ENCODE measurements at regions of chr10 and their contacts with region 1.

Region 1: GRCh38 chr10:33952692-33953348 is 618.4 kb upstream of the NRP1 start:
- DNase-seq: peak; percentile 99
- ATAC-seq: peak; percentile 99
- H3K4me3 ChIP-seq: no peak overlapping the region
- H3K27ac ChIP-seq: peak overlapping the region; percentile 10; the same call in 1 of the 2 replicates
- H3K4me1 ChIP-seq: peaks cover 10% of the 10 kb centered on the region; the same call in 1 of the 2 replicates
- H3K27me3 ChIP-seq: no peaks in the 10 kb centered on the region
- CTCF ChIP-seq: no peak

Region 2: DNA sequence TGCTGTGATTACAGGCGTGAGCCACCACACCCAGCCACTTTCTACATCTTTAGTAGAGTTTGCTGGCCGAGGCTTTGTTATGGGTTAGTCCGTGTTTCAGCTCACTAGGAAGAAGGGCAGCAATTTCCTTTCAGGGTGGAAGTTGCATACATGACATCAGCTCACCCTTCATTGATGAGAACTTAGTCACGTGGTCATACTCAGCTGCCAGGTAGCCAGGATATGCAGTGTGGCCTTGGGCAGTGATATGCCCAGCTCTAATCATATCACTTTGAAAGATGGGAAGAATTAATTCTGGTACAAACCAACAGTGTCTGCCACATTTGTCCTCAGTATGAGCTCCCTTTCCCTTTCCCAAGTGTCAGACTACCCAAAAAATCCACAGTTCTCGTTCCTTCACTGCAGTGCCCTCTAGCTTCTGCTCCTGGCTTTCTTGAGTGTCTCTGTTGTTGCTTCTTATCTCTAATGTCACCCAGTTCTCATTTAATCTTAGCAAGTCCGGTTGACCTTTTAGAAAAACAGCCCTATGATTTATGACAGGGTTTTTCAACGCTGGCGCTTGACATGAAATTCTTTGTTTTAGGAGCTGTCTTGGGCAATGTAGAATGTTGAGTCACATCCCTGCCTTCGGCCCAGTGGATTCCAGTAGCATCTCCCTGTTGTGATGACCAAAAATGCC is 886.1 kb before region 1 on chr10:
- CTCF ChIA-PET with region 1: interaction called, 18 read pairs
- POLR2A ChIA-PET with region 1: no interaction called
- intact Hi-C with region 1: no loop called
- DNase-seq: peak; percentile 25
- ATAC-seq: no peak; the same call in 1 of the 2 replicates
- H3K4me3 ChIP-seq: no peak overlapping the region
- H3K27ac ChIP-seq: no peak overlapping the region
- H3K4me1 ChIP-seq: no peaks in the 10 kb centered on the region
- H3K27me3 ChIP-seq: no peaks in the 10 kb centered on the region
- CTCF ChIP-seq: peak; percentile 55

Region 3: GRCh38 chr10:33187427-33187999 is 765.3 kb before region 1 on chr10:
- CTCF ChIA-PET with region 1: no interaction called
- POLR2A ChIA-PET with region 1: interaction called, 11 read pairs
- intact Hi-C with region 1: no loop called
- DNase-seq: no peak
- ATAC-seq: no peak
- H3K4me3 ChIP-seq: no peak overlapping the region
- H3K27ac ChIP-seq: no peak overlapping the region
- H3K4me1 ChIP-seq: peaks cover 16% of the 10 kb centered on the region
- H3K27me3 ChIP-seq: no peaks in the 10 kb centered on the region
- CTCF ChIP-seq: no peak

Region 4: DNA sequence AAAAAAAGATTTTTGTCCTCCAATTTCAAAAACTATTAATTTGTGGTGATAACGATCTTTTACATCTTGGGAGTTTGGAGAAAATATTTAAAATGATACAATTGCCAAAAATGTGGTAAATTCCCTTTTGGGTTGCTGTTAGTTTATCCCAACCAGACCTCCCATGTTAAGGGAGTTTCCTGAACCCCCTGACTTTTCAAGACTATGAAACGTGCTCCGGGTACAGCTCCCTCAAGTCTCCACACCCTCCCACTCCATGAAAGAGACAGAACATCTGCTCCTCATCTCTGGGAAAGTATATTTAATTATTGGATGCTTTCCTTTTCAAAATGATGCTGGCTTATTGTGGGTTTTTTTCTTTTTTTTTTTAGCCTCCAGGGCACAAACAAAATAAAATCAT is 83.8 kb before region 1 on chr10:
- CTCF ChIA-PET with region 1: no interaction called
- POLR2A ChIA-PET with region 1: no interaction called
- intact Hi-C with region 1: no loop called
- DNase-seq: no peak
- ATAC-seq: no peak
- H3K4me3 ChIP-seq: no peak overlapping the region
- H3K27ac ChIP-seq: no peak overlapping the region
- H3K4me1 ChIP-seq: no peaks in the 10 kb centered on the region
- H3K27me3 ChIP-seq: no peaks in the 10 kb centered on the region
- CTCF ChIP-seq: no peak

Region 5: GRCh38 chr10:34037499-34037898 is 84.7 kb after region 1 on chr10:
- CTCF ChIA-PET with region 1: no interaction called
- POLR2A ChIA-PET with region 1: no interaction called
- intact Hi-C with region 1: no loop called
- DNase-seq: no peak
- ATAC-seq: no peak
- H3K4me3 ChIP-seq: no peak overlapping the region
- H3K27ac ChIP-seq: no peak overlapping the region
- H3K4me1 ChIP-seq: no peaks in the 10 kb centered on the region
- H3K27me3 ChIP-seq: no peaks in the 10 kb centered on the region
- CTCF ChIP-seq: no peak